SK-N-SH (cell line): ENCODE measurements at regions of chr20 and their contacts with region 1.

Region 1: GRCh38 chr20:13302647-13303450 is 81.8 kb downstream of the ISM1 start:
- DNase-seq: peak; percentile 61
- H3K4me3 ChIP-seq: no peak overlapping the region
- H3K27ac ChIP-seq: no peak overlapping the region
- H3K4me1 ChIP-seq: no peaks in the 10 kb centered on the region; a peak in 1 of 4 replicates
- H3K27me3 ChIP-seq: no peaks in the 10 kb centered on the region
- CTCF ChIP-seq: peak; percentile 63
- EP300 ChIP-seq: no peak
- RAD21 ChIP-seq: peak; percentile 62

Region 2: DNA sequence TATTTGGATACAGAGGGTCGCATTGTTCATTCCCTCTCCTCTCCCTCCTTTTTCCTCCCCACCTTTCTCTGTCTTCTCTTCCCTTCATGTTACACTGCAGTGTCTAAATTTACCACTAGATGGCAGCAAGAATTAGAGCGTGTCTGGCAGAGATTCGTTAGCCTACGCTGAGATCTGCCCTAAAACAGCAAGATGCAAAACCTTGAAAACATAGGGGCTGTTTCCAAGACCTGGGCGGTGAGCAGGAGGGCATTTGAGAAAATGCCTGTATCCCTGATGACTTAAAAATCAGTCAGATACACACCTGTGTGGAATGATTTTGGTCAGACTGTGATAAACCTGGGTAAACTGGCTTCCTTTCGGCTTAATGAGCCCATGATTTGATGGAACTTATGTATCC is 183.3 kb before region 1 on chr20:
- CTCF ChIA-PET with region 1: interaction called, 22 read pairs
- POLR2A ChIA-PET with region 1: no interaction called
- DNase-seq: peak; percentile 51
- H3K4me3 ChIP-seq: peak overlapping the region in 1 of 2 experiments; percentile 13; a peak in 1 of 4 replicates
- H3K27ac ChIP-seq: no peak overlapping the region
- H3K4me1 ChIP-seq: no peaks in the 10 kb centered on the region
- H3K27me3 ChIP-seq: no peaks in the 10 kb centered on the region
- CTCF ChIP-seq: peak; percentile 88
- EP300 ChIP-seq: no peak
- RAD21 ChIP-seq: peak; percentile 90

Region 3: DNA sequence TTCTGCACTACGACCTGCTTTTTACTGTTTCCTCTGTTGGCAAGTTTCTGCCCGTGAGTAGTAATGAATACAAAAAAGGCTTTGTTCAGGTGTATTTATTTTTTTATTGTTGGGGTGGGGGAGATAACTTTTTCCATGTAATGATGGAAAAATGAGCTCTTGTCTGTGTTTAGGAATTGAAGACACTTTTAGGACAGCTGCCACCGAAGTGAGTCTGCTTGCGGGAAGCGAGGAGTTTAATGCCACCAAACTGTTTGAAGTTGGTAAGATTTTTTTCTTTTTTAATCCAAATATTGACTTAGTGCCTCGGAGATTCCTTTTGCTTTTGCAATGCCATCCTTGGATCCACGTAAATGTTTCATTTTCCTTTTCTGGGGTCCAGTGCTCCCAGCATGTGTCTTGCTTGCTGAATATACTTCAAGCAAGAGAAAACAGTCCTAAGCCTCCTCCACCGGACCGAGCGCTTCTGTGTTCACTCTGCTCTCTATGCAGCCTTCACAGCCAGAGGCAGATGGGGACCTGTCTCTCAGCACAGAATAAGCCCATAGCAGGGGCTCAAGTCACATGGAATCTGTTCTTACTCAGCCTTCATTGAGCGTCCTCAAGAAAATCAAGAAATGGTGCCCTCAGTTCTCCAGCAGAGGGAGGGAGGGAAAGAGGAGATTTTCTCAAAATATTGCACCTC is 10.5 kb before region 1 on chr20:
- CTCF ChIA-PET with region 1: interaction called, 10 read pairs
- POLR2A ChIA-PET with region 1: no interaction called
- DNase-seq: no peak
- H3K4me3 ChIP-seq: no peak overlapping the region
- H3K27ac ChIP-seq: no peak overlapping the region
- H3K4me1 ChIP-seq: peaks cover 0 to 5% of the 10 kb centered on the region in 2 experiments; a peak in 1 of 4 replicates
- H3K27me3 ChIP-seq: no peaks in the 10 kb centered on the region; the same call in 1 of the 2 replicates
- CTCF ChIP-seq: no peak
- EP300 ChIP-seq: no peak
- RAD21 ChIP-seq: no peak